BJ (cell line): ENCODE measurements at regions of chr16 and their contacts with region 1.

Region 1: GRCh38 chr16:46859719-46860152 is 24.4 kb upstream of the GPT2 start:
- DNase-seq: no peak
- H3K4me3 ChIP-seq: no peak overlapping the region
- H3K27me3 ChIP-seq: no peaks in the 10 kb centered on the region
- CTCF ChIP-seq: no peak

Region 2: GRCh38 chr16:46591257-46591656 is 268.5 kb before region 1 on chr16:
- CTCF ChIA-PET with region 1: no interaction called
- POLR2A ChIA-PET with region 1: no interaction called
- DNase-seq: no peak
- H3K4me3 ChIP-seq: no peak overlapping the region
- H3K27me3 ChIP-seq: no peaks in the 10 kb centered on the region
- CTCF ChIP-seq: no peak

Region 3: DNA sequence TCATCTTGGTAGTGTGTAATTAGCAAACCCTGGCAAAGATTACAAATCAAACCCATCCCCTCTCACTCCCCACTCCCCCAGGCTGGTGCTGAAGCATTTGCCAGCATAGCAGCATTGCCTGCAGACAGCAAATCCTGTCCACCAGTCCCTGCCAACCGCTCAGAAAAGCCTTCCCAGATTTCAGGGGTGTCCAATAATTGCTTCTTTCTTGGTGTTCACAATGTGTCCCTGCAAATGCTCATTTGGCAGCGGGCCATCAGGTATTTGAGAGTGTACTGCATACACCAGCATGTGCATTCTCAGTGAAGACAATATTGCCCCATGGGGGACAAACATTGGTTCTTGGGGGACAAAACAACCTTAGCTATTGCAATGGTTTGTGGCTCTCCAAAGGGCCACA is 142.0 kb before region 1 on chr16:
- CTCF ChIA-PET with region 1: no interaction called
- POLR2A ChIA-PET with region 1: no interaction called
- DNase-seq: no peak
- H3K4me3 ChIP-seq: no peak overlapping the region
- H3K27me3 ChIP-seq: no peaks in the 10 kb centered on the region
- CTCF ChIP-seq: no peak

Region 4: DNA sequence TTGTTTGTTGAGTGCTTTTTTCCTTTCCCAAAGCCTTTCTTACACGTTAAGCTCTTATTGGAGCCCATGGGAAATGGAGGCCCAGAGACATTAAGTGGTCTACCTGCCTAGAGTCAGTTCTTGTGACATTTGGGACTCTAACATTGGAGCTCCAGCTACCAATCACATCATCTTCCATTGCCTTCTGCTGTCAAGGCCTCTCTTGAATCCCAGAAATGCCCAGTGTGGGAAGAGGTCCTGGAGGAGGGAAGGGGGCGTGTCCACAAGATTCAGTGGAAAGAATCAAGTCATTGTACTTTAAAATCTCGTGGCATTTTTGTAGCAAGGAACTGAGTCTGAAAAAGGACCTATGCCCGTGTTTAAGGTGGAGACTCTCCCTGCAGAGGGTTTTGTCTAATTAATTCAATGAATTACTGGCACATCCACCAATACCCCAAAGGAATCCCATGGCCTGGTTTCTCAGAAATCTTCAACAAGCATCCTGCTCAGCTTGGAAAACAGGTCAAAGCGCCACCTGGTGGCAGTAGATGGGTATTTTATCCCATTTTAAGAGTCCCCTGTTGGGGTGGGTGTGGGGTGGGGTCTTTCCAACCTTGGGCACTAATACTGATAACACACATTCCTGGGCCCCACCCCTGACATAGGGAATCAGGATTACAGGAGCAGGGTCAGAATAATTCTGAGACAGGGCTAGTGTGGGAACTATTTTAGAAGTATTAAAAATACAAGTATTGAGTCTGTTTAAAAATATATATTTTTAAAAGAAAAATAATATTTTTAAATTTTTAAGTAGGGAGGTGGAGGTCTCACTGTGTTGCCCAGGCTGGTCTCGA is 49.0 kb after region 1 on chr16:
- CTCF ChIA-PET with region 1: interaction called, 231 read pairs
- POLR2A ChIA-PET with region 1: no interaction called
- DNase-seq: no peak
- H3K4me3 ChIP-seq: no peak overlapping the region
- H3K27me3 ChIP-seq: no peaks in the 10 kb centered on the region
- CTCF ChIP-seq: peak; percentile 75